ENCODE measurements at regions of chr3 and their contacts with region 1.

Region 1: GRCh38 chr3:189967254-189967865 is 153.3 kb downstream of the P3H2 start:
- DNase-seq: no peak
- ATAC-seq: peak; percentile 38

Region 2: DNA sequence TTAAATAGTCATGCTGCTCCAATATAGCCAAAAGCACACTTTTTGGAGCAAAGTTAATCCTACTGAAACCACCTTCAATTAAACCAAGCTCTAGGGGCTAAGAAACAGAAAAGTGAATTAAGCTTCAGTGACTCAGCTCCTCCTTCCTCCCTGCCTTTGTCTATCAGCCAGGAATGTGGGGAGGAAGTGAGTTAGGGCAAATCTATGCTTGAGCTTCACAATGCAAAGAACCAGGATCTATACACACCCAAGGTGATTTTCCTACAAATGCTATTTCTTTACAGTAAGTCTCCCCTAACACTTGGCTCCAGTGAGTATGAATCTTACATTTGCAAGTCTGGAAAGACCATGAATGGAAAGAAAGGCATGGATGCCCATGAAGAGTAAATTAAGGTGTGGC is 58.7 kb before region 1 on chr3:
- intact Hi-C with region 1: no loop called
- DNase-seq: no peak
- ATAC-seq: no peak

Region 3: GRCh38 chr3:190120269-190121060 is 153.1 kb after region 1 on chr3 and contains the start of gene P3H2:
- intact Hi-C with region 1: loop called in 1 of 2 experiments (anchors 5 kb)
- DNase-seq: peak; percentile 83 to 85
- ATAC-seq: peak; percentile 99
- total RNA-seq, gene P3H2: 39.5 to 46.4 TPM

Region 4: GRCh38 chr3:190204200-190204599 is 236.8 kb after region 1 on chr3:
- intact Hi-C with region 1: loop called (anchors 5 to 10 kb)
- DNase-seq: no peak
- ATAC-seq: no peak